Activated CD4-positive, alpha-beta T cell treated with anti-CD3 and anti-CD28 coated beads, Interleukin-2, amount 10 ng/mL, durations not matched to agents 24 days and 14 days (primary cell): ENCODE measurements at regions of chr1 and their contacts with region 1.

Region 1: DNA sequence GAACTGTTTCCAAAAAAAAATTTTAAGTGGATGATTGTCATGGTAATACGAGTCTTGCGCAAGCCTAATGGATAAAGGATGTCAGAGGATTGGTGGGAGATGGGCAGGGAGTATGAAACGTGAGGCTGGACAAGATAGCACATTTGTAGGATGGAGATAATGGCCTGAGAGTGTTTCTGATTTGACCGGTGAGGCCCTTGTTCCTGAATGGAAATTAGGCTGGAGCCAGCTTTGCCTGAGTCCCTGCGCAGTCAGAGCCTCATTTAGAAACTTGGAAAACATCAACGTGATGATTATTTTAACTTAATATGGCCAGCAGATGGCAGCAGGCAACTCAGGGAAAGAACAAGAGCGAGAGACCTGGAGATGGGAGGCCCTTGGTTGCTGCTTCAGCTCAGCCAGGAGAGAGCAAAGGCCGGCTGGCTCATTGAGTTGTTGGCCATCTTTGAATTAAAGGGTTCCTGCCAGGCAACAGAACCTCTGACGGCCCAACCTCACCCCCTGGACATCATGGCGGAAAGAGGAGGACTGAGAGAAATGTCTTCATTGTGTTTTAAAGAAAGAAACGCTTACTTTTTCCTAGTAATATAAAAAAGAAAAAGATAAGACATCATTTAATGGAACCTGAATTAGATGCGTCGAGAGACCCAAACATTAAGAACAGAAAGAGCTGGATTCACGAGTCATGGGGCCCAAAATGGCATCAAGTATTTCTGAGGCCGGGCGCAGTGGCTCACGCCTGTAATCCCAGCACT is 80.3 kb downstream of the SELENOF start:
- DNase-seq: peak; percentile 85
- H3K4me3 Mint-ChIP-seq: no peak overlapping the region
- H3K27ac Mint-ChIP-seq: no peak overlapping the region
- H3K4me1 Mint-ChIP-seq: peaks cover 4% of the 10 kb centered on the region
- H3K27me3 Mint-ChIP-seq: peaks cover 6% of the 10 kb centered on the region

Region 2: DNA sequence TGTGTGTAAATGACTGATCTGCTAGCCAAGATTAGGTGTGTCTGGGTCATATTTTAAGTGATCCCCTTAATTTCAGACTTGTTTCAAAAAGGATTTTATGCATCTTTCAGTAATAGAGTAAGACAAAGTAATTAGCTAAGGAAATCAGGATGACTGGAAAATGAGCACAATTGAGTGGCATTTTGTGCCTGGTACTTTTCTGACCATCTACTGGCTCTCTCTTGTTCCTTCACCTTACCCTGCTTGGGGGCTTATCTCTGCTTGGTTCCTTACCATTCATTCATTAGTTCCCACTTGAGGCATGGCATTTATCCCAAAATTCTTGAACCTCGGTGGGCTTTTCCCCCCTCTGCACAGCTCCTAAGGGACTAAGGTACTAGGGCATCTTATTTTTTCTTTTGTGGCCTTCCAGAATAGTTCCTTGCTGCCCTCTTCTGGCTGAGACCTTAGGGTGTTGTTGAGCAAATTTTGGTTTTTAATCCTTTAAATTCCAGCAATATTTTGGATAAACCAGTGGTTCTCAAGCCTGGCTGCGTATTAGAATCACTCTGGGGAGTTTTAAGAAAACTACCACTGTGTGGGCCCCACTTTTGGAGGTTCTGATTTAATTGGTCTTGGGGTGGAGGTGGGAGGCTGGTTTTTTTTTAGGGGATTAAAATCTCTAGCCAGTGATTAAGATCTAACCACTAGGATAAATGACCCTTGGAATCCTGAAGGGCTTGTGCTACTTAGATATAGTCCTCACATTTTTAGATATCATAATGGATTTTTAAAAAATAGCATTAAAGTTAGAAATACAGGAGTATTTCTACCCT is 131.6 kb after region 1 on chr1:
- intact Hi-C with region 1: loop called (anchors 1 kb)
- DNase-seq: peak; percentile 70
- H3K4me3 Mint-ChIP-seq: no peak overlapping the region
- H3K27ac Mint-ChIP-seq: no peak overlapping the region
- H3K4me1 Mint-ChIP-seq: no peaks in the 10 kb centered on the region
- H3K27me3 Mint-ChIP-seq: no peaks in the 10 kb centered on the region